ENCODE measurements at regions of chr11 and their contacts with region 1.

Region 1: GRCh38 chr11:66438504-66439466 is at the start of gene MRPL11:
- DNase-seq: peak; percentile 97
- ATAC-seq: peak; percentile 99
- H3K4me3 Mint-ChIP-seq: peak within 1 kb of the TSS; percentile 96
- H3K27ac Mint-ChIP-seq: peak within 1 kb of the TSS; percentile 98
- H3K4me1 Mint-ChIP-seq: peaks cover 20% of the 10 kb centered on the region
- H3K27me3 Mint-ChIP-seq: peaks cover 1% of the 10 kb centered on the region
- CTCF ChIP-seq: peak; percentile 58
- total RNA-seq, gene MRPL11: 135 to 142 TPM

Region 2: DNA sequence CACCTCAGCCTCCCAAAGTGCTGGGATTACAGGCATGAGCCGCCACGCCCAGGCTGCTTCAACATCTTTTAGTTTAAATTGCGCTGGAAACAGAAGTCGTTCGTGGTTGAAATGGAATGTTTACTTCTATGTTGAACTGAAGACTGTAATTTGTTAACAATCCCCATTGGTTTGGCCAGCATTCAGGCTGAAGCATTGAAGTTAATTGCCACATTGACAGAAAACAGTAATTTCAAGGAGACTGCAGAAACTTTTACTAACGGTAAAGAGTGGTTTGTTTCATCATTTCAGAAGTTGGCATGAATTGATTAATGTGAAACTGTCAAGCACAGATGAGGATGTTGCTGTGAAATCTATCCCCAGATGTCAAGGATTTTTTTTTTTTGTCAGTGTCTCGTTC is 672.2 kb before region 1 on chr11:
- CTCF ChIA-PET with region 1: no interaction called
- POLR2A ChIA-PET with region 1: no interaction called
- intact Hi-C with region 1: no loop called
- DNase-seq: no peak
- ATAC-seq: no peak
- H3K4me3 Mint-ChIP-seq: no peak overlapping the region
- H3K27ac Mint-ChIP-seq: no peak overlapping the region
- H3K4me1 Mint-ChIP-seq: peaks cover 4% of the 10 kb centered on the region
- H3K27me3 Mint-ChIP-seq: no peaks in the 10 kb centered on the region
- CTCF ChIP-seq: no peak

Region 3: GRCh38 chr11:66258473-66258893 is 180.3 kb before region 1 on chr11:
- CTCF ChIA-PET with region 1: no interaction called
- POLR2A ChIA-PET with region 1: no interaction called
- intact Hi-C with region 1: no loop called
- DNase-seq: no peak
- ATAC-seq: no peak
- H3K4me3 Mint-ChIP-seq: peak overlapping the region; percentile 95
- H3K27ac Mint-ChIP-seq: peak overlapping the region; percentile 82
- H3K4me1 Mint-ChIP-seq: peaks cover 24% of the 10 kb centered on the region
- H3K27me3 Mint-ChIP-seq: no peaks in the 10 kb centered on the region
- CTCF ChIP-seq: peak; percentile 29

Region 4: GRCh38 chr11:66454249-66454648 is 15.5 kb after region 1 on chr11:
- CTCF ChIA-PET with region 1: interaction called, 12 read pairs
- POLR2A ChIA-PET with region 1: interaction called, 5 read pairs
- intact Hi-C with region 1: no loop called
- DNase-seq: peak; percentile 58
- ATAC-seq: peak; percentile 54
- H3K4me3 Mint-ChIP-seq: no peak overlapping the region
- H3K27ac Mint-ChIP-seq: peak overlapping the region; percentile 12
- H3K4me1 Mint-ChIP-seq: peaks cover 30% of the 10 kb centered on the region
- H3K27me3 Mint-ChIP-seq: no peaks in the 10 kb centered on the region
- CTCF ChIP-seq: no peak

Region 5: DNA sequence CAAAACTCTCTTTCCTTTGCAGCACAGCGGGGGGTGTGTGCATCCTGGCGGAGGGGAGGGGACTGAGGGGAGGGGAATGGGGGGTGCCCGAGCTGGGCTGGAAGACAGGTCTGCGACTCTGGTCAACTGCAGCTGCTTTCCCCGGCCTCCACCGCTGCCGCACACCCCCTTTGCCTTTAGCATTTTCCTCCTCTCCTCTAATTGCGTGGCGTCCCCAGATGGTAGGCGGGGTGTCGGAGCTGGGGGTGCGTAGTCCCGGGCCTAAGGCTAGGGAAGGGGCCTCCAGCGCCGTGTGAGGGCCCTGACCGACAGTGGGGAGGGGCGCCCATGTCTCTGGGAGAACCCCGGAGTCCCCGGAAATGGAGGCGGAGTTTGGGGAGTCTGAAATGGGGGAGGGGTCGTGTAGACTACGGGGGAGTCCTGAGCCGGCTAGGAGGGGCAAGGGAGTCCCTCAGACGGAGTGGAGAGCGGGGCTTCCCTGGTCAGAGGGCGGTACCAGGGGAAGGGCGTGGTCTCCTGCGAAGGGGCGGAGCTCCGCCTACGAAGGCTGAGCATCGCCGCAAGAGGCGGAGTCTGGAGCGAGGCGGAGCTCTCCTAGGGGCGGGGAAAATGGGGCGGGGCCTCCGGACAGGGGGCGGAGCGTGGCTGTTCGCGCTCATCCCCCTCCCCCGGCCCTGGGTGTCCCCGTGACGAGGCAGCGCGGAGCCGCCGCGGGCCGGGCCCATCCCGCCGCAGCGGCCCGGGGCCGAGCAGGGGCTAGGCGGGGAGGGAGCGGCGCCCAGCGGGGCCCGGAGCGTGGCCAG is 27.6 kb after region 1 on chr11 and contains the start of gene PELI3:
- CTCF ChIA-PET with region 1: interaction called, 13 read pairs
- POLR2A ChIA-PET with region 1: interaction called, 6 read pairs
- intact Hi-C with region 1: loop called (anchors 5 kb)
- DNase-seq: peak; percentile 94
- ATAC-seq: peak; percentile 92
- H3K4me3 Mint-ChIP-seq: peak within 1 kb of the TSS; percentile 86
- H3K27ac Mint-ChIP-seq: peak within 1 kb of the TSS; percentile 81
- H3K4me1 Mint-ChIP-seq: peaks cover 40% of the 10 kb centered on the region
- H3K27me3 Mint-ChIP-seq: no peaks in the 10 kb centered on the region
- CTCF ChIP-seq: no peak
- total RNA-seq, gene PELI3: 6.7 to 10.5 TPM

Region 6: GRCh38 chr11:66491315-66491935 is 52.6 kb after region 1 on chr11:
- CTCF ChIA-PET with region 1: no interaction called
- POLR2A ChIA-PET with region 1: no interaction called
- intact Hi-C with region 1: no loop called
- DNase-seq: no peak
- ATAC-seq: peak; percentile 55
- H3K4me3 Mint-ChIP-seq: no peak overlapping the region
- H3K27ac Mint-ChIP-seq: no peak overlapping the region
- H3K4me1 Mint-ChIP-seq: no peaks in the 10 kb centered on the region
- H3K27me3 Mint-ChIP-seq: no peaks in the 10 kb centered on the region
- CTCF ChIP-seq: peak; percentile 32